CD8-positive, alpha-beta memory T cell (primary cell): ENCODE measurements at regions of chr1 and their contacts with region 1.

Region 1: GRCh38 chr1:33295450-33296081 is 25.3 kb downstream of the A3GALT2 start:
- DNase-seq: peak; percentile 68 to 91 (median 78)
- H3K4me3 ChIP-seq: no peak overlapping the region
- H3K4me3 Mint-ChIP-seq: no peak overlapping the region
- H3K27ac ChIP-seq: no peak overlapping the region
- H3K27ac Mint-ChIP-seq: peak overlapping the region in 3 of 8 donors; percentile 32 to 61 (median 54)
- H3K4me1 ChIP-seq: peaks cover 5% of the 10 kb centered on the region
- H3K4me1 Mint-ChIP-seq: peaks cover 9 to 16% (median 16%) of the 10 kb centered on the region in 3 donors
- H3K27me3 ChIP-seq: no peaks in the 10 kb centered on the region
- H3K27me3 Mint-ChIP-seq: peaks cover 0 to 2% of the 10 kb centered on the region in 2 donors

Region 2: GRCh38 chr1:33306648-33307493 is 11.3 kb after region 1 on chr1:
- CTCF ChIA-PET with region 1: interaction called, 11 read pairs
- POLR2A ChIA-PET with region 1: no interaction called
- DNase-seq: no peak
- H3K4me3 ChIP-seq: no peak overlapping the region
- H3K4me3 Mint-ChIP-seq: no peak overlapping the region
- H3K27ac ChIP-seq: no peak overlapping the region
- H3K27ac Mint-ChIP-seq: peak overlapping the region in 1 of 8 donors; percentile 55
- H3K4me1 ChIP-seq: peaks cover 10% of the 10 kb centered on the region
- H3K4me1 Mint-ChIP-seq: peaks cover 14 to 16% (median 15%) of the 10 kb centered on the region in 3 donors
- H3K27me3 ChIP-seq: no peaks in the 10 kb centered on the region
- H3K27me3 Mint-ChIP-seq: peaks cover 6 to 12% of the 10 kb centered on the region in 2 donors

Region 3: DNA sequence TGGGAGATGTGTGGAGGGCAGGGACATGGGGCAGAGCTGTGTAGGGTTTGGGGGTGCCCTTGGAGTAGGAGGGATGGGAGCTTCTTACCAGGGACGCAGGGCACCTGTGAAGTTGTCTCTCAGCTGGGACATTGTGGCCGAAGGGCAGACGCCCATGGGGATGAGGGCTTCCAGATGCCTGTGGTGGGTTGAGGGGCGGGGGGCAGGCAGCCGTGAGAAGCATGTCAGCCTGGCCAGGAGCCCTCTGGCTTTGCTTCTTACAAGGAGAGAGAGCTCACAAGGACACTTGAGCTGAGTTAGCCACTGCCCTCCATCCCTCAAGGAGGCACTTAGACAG is 16.8 kb after region 1 on chr1:
- CTCF ChIA-PET with region 1: interaction called, 11 read pairs
- POLR2A ChIA-PET with region 1: no interaction called
- DNase-seq: no peak
- H3K4me3 ChIP-seq: no peak overlapping the region
- H3K4me3 Mint-ChIP-seq: no peak overlapping the region
- H3K27ac ChIP-seq: no peak overlapping the region
- H3K27ac Mint-ChIP-seq: no peak overlapping the region
- H3K4me1 ChIP-seq: no peaks in the 10 kb centered on the region
- H3K4me1 Mint-ChIP-seq: peaks cover 0 to 3% (median 0%) of the 10 kb centered on the region in 3 donors
- H3K27me3 ChIP-seq: no peaks in the 10 kb centered on the region
- H3K27me3 Mint-ChIP-seq: peaks cover 9 to 17% of the 10 kb centered on the region in 2 donors

Region 4: DNA sequence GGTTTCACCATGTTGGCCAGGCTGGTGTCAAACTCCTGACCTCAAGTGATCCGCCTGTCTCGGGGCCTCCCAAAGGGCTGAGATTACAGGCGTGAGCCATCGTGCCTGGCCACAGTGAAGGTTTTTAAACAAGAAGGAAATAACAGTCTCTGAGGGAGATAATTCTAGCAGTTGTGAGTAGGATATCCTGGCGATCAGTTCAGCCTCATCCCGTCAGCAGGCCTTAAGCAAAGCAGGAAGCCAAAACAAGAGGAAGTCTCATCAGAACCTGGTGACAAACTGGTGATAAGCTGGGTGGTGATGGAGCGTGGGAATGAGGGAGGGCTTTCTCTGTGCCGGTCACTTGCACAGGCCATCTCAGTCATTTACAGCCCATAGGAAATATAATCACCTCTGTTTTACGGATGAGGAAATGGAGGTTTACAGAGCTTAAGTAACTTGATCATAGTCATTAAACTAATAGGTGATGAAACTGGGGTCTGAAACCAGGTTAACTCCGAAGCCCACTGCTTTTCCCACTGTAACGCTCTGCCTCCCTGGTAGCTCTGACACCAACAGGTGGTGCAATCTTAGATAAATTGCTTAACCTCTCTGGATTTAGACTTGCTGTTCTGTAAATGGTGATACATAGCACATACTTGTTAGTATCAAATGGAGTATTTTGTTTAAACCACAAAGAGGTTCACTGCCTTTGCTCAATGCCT is 66.1 kb after region 1 on chr1:
- CTCF ChIA-PET with region 1: interaction called, 75 read pairs
- POLR2A ChIA-PET with region 1: no interaction called
- DNase-seq: no peak
- H3K4me3 ChIP-seq: no peak overlapping the region
- H3K4me3 Mint-ChIP-seq: no peak overlapping the region
- H3K27ac ChIP-seq: no peak overlapping the region
- H3K27ac Mint-ChIP-seq: no peak overlapping the region
- H3K4me1 ChIP-seq: no peaks in the 10 kb centered on the region
- H3K4me1 Mint-ChIP-seq: no peaks in the 10 kb centered on the region
- H3K27me3 ChIP-seq: no peaks in the 10 kb centered on the region
- H3K27me3 Mint-ChIP-seq: peaks cover 0 to 8% of the 10 kb centered on the region in 2 donors

Region 5: DNA sequence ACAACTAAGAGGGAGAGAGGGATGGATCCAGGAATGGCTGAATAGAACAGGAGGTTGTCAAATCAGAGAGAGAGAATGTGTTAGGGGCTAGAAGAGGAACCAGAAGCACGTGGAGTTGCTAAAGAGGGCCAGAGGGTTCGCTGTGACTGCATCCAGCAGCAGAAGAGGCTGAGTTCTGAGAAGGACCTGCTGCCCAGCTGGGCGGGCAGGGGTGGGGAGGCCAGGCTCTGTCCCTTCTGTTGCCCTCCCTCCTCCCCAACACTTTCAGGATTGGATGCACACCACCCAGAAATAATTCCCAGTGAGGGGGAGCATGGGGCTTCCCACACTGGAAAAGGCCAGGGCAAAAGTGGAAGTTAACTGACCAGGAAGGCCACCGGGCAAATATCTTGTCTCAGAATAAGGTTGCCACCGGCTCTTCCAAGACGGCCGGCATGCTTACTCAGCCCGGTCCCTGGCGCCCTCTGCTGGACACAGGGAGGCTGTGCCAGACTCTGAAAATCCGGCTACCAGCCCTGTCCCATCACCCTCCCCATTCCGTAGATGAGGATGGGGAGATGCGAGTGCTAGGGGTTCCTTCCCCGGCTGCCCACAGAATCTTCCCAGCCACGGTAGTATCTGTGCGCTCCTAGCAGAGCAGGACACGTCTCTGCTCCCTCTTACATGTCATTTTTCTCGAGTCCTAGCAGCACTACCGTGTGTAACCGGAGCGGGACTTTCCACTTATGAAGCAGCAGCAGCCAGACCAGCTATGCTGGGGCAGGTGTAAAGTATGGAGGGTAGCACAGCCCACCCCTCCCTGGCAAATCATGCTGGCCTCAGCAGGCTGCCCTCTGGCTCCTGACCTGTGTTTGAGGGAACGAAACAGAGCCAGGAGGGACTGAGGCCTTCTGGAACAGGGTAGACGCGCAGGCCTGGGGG is 72.2 kb after region 1 on chr1:
- CTCF ChIA-PET with region 1: interaction called, 75 read pairs
- POLR2A ChIA-PET with region 1: no interaction called
- DNase-seq: peak; percentile 71 to 87 (median 78)
- H3K4me3 ChIP-seq: no peak overlapping the region
- H3K4me3 Mint-ChIP-seq: no peak overlapping the region
- H3K27ac ChIP-seq: no peak overlapping the region
- H3K27ac Mint-ChIP-seq: peak overlapping the region in 2 of 8 donors; percentile 8 to 33
- H3K4me1 ChIP-seq: no peaks in the 10 kb centered on the region
- H3K4me1 Mint-ChIP-seq: peaks cover 0 to 3% (median 1%) of the 10 kb centered on the region in 3 donors
- H3K27me3 ChIP-seq: no peaks in the 10 kb centered on the region
- H3K27me3 Mint-ChIP-seq: peaks cover 5 to 8% of the 10 kb centered on the region in 2 donors

Region 6: GRCh38 chr1:33472349-33472980 is 176.9 kb after region 1 on chr1 and contains the start of gene ZSCAN20:
- CTCF ChIA-PET with region 1: interaction called, 15 read pairs
- POLR2A ChIA-PET with region 1: no interaction called
- DNase-seq: peak; percentile 66 to 87 (median 77)
- H3K4me3 ChIP-seq: peak within 1 kb of the TSS; percentile 49
- H3K4me3 Mint-ChIP-seq: peak within 1 kb of the TSS; percentile 62 to 98 (median 93)
- H3K27ac ChIP-seq: no peak within 1 kb of the TSS
- H3K27ac Mint-ChIP-seq: peak within 1 kb of the TSS; percentile 2 to 99 (median 92)
- H3K4me1 ChIP-seq: peaks cover 15% of the 10 kb centered on the region
- H3K4me1 Mint-ChIP-seq: peaks cover 27 to 34% (median 33%) of the 10 kb centered on the region in 3 donors
- H3K27me3 ChIP-seq: no peaks in the 10 kb centered on the region
- H3K27me3 Mint-ChIP-seq: no peaks in the 10 kb centered on the region
- total RNA-seq, gene ZSCAN20: 3.3 to 3.6 TPM